CD4-positive, alpha-beta T cell (primary cell): ENCODE measurements at regions of chr19 and their contacts with region 1.

Region 1: DNA sequence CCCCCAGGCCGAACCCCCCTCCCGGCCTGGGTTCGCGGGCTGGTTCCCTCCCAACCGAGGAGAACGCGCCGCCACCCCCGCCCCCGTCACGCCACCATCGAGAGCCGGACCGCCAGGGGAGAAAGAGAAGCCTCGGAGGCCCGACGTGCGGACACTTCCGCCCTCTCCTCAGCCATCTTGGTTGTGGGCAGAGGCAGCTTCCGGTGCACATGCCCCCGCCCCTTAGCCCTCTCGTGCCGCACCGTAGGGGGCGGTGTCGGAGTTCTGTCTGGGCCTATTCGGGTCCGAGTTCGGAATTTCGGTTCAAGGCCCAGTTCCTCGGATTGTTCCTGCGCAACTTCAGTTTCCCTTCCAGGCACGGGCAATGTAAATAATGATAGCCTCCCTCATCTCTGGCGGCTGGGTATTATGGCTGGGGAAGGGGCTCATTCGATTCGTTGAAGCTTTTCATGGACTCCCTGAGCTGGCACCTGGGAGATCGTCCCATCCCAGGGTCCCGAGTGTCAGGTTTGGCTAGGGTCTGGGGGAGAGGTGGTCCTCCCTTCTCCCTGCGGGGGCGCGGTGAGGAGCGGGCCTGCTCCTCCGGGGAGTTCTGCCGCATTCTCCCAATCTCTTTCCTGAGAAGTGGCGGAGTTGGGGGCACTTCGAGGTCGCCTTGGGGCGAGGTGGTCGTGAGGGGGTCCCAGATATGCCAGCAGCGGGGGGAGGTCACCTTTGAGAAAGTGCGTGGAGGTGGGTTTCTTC is at the starts of genes IER2 and STX10:
- DNase-seq: peak; percentile 88 to 97 (median 92)
- ATAC-seq: peak; percentile 56
- H3K4me3 ChIP-seq: peak within 1 kb of the TSS; percentile 83
- H3K4me3 Mint-ChIP-seq: peak within 1 kb of the TSS; percentile 99
- H3K27ac ChIP-seq: peak within 1 kb of the TSS; percentile 74 to 97
- H3K27ac Mint-ChIP-seq: peak within 1 kb of the TSS; percentile 98
- H3K4me1 ChIP-seq: peaks cover 33% of the 10 kb centered on the region
- H3K4me1 Mint-ChIP-seq: peaks cover 30% of the 10 kb centered on the region
- H3K27me3 ChIP-seq: no peaks in the 10 kb centered on the region
- H3K27me3 Mint-ChIP-seq: peaks cover 8% of the 10 kb centered on the region
- CTCF ChIP-seq: peak; percentile 66
- total RNA-seq, gene IER2: 254 to 255 TPM
- total RNA-seq, gene STX10: 40.9 to 43.9 TPM

Region 2: DNA sequence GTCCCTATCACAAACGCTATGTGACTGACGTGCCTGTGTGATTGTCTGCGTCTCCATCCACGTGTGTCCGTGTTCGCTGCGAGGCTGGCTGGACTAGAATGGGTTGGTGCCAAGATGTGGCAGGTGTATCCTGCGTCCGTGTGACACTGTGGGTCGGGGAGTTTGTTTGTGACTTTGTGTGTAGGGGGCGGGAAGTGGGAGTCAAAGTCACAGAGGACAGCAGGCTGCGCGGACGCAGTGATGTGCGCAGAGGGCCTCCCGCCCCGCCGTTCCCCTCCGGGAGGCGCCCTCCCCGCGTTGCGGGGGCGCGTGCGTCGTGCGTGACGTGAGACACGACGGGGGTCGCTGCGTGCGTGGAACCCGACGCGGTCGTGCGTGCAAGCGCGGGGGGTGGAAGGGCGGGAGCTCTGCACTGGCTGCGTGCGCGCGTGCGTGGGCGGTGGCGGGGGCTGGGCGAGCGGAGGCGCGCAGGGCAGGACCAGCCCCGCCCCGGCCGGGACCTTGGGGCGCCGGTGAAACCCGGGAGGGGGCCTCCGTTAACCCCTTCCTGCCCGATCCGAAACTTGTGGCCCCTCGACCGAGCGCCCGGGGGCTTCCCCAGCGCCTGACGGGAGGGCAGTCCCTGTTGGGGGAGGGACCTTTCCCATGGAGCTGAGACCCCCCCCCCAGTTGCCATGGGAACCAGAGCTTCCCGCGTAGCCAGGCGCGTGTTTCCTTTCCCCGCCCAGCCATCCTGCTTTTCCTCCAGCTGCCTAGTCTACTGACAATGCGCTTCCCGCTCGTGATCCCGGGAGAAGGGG is 367.9 kb before region 1 on chr19:
- CTCF ChIA-PET with region 1: no interaction called
- POLR2A ChIA-PET with region 1: no interaction called
- intact Hi-C with region 1: loop called in 1 of 2 experiments (anchors 2 kb)
- DNase-seq: peak; percentile 89 to 99 (median 94)
- ATAC-seq: peak; percentile 75
- H3K4me3 ChIP-seq: peak overlapping the region; percentile 61
- H3K4me3 Mint-ChIP-seq: peak overlapping the region; percentile 92
- H3K27ac ChIP-seq: peak overlapping the region; percentile 91 to 98
- H3K27ac Mint-ChIP-seq: no peak overlapping the region
- H3K4me1 ChIP-seq: peaks cover 85% of the 10 kb centered on the region
- H3K4me1 Mint-ChIP-seq: peaks cover 41% of the 10 kb centered on the region
- H3K27me3 ChIP-seq: no peaks in the 10 kb centered on the region
- H3K27me3 Mint-ChIP-seq: no peaks in the 10 kb centered on the region
- CTCF ChIP-seq: no peak

Region 3: GRCh38 chr19:13104360-13104847 is 46.0 kb before region 1 on chr19:
- CTCF ChIA-PET with region 1: interaction called, 6 read pairs
- POLR2A ChIA-PET with region 1: interaction called, 38 read pairs
- intact Hi-C with region 1: loop called (anchors 1 to 5 kb)
- DNase-seq: peak; percentile 40 to 81 (median 59)
- ATAC-seq: peak; percentile 53
- H3K4me3 ChIP-seq: peak overlapping the region; percentile 77
- H3K4me3 Mint-ChIP-seq: peak overlapping the region; percentile 93
- H3K27ac ChIP-seq: peak overlapping the region; percentile 41 to 66
- H3K27ac Mint-ChIP-seq: peak overlapping the region; percentile 89
- H3K4me1 ChIP-seq: peaks cover 68% of the 10 kb centered on the region
- H3K4me1 Mint-ChIP-seq: peaks cover 38% of the 10 kb centered on the region
- H3K27me3 ChIP-seq: no peaks in the 10 kb centered on the region
- H3K27me3 Mint-ChIP-seq: no peaks in the 10 kb centered on the region
- CTCF ChIP-seq: peak; percentile 86

Region 4: GRCh38 chr19:13132471-13133180 is 17.7 kb before region 1 on chr19:
- CTCF ChIA-PET with region 1: interaction called, 4 read pairs
- POLR2A ChIA-PET with region 1: interaction called, 11 read pairs
- intact Hi-C with region 1: no loop called
- DNase-seq: peak in 6 of 14 experiments; percentile 29 to 69 (median 48)
- ATAC-seq: peak; percentile 95
- H3K4me3 ChIP-seq: no peak overlapping the region
- H3K4me3 Mint-ChIP-seq: no peak overlapping the region
- H3K27ac ChIP-seq: peak overlapping the region in 1 of 2 donors; percentile 15
- H3K27ac Mint-ChIP-seq: peak overlapping the region; percentile 80
- H3K4me1 ChIP-seq: peaks cover 24% of the 10 kb centered on the region
- H3K4me1 Mint-ChIP-seq: peaks cover 33% of the 10 kb centered on the region
- H3K27me3 ChIP-seq: no peaks in the 10 kb centered on the region
- H3K27me3 Mint-ChIP-seq: no peaks in the 10 kb centered on the region
- CTCF ChIP-seq: no peak

Region 5: GRCh38 chr19:13181747-13182388 is 31.5 kb after region 1 on chr19:
- CTCF ChIA-PET with region 1: interaction called, 4 read pairs
- POLR2A ChIA-PET with region 1: interaction called, 21 read pairs
- intact Hi-C with region 1: no loop called
- DNase-seq: peak in 3 of 14 experiments; percentile 42 to 57 (median 51)
- ATAC-seq: peak; percentile 64
- H3K4me3 ChIP-seq: no peak overlapping the region
- H3K4me3 Mint-ChIP-seq: peak overlapping the region; percentile 15
- H3K27ac ChIP-seq: no peak overlapping the region
- H3K27ac Mint-ChIP-seq: peak overlapping the region; percentile 58
- H3K4me1 ChIP-seq: peaks cover 40% of the 10 kb centered on the region
- H3K4me1 Mint-ChIP-seq: peaks cover 32% of the 10 kb centered on the region
- H3K27me3 ChIP-seq: no peaks in the 10 kb centered on the region
- H3K27me3 Mint-ChIP-seq: no peaks in the 10 kb centered on the region
- CTCF ChIP-seq: no peak

Region 6: GRCh38 chr19:13234518-13234917 is 84.2 kb after region 1 on chr19:
- CTCF ChIA-PET with region 1: interaction called, 3 read pairs
- POLR2A ChIA-PET with region 1: interaction called, 4 read pairs
- intact Hi-C with region 1: loop called in 1 of 2 experiments (anchors 1 kb)
- DNase-seq: peak; percentile 34 to 80 (median 57)
- ATAC-seq: peak; percentile 94
- H3K4me3 ChIP-seq: peak overlapping the region; percentile 12
- H3K4me3 Mint-ChIP-seq: peak overlapping the region; percentile 46
- H3K27ac ChIP-seq: no peak overlapping the region
- H3K27ac Mint-ChIP-seq: no peak overlapping the region
- H3K4me1 ChIP-seq: peaks cover 14% of the 10 kb centered on the region
- H3K4me1 Mint-ChIP-seq: peaks cover 14% of the 10 kb centered on the region
- H3K27me3 ChIP-seq: no peaks in the 10 kb centered on the region
- H3K27me3 Mint-ChIP-seq: no peaks in the 10 kb centered on the region
- CTCF ChIP-seq: peak; percentile 77

Region 7: DNA sequence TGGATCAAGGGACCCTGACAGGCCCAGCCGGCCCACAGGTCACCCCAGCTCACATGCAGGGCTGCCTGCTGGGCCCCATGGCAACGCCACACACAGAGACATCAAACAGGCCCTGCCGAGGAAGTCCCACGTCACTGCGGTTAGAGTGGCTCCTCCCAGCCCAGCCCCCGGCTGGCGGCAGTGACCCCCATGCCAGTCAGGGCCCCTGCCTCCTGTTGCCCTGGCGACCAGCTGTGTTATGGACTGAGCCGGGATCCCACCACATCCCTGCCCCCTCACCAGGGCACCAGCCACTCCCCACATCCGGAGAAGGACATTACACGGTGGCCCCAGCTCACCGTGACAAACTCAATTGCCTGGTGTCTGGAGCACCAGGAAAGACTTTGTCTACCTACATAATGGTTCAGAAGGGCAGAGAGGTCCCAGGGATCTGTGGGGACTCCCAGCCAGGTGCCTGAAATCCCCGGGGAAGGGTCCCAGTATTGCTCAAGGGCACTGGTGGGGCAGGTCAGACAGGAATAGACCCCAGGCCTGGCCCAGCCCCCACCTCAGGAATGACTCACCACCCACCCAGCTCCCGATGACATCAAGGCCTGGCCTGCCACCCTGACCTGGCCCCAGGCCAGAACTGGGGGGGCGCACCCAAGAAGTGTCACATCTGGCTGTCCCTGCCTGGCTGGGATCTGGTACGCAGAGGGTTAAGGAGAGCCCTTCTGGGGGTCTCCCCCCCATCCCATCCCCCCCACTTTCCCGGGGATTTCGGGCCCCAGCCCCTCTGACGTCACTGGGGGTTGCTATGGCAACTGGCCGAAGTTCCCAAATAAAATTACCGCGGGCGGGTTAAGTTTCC is 696.4 kb after region 1 on chr19:
- CTCF ChIA-PET with region 1: no interaction called
- POLR2A ChIA-PET with region 1: no interaction called
- intact Hi-C with region 1: loop called in 1 of 2 experiments (anchors 10 kb)
- DNase-seq: peak; percentile 86 to 99 (median 96)
- ATAC-seq: peak; percentile 61
- H3K4me3 ChIP-seq: peak overlapping the region; percentile 76
- H3K4me3 Mint-ChIP-seq: peak overlapping the region; percentile 86
- H3K27ac ChIP-seq: peak overlapping the region; percentile 100
- H3K27ac Mint-ChIP-seq: peak overlapping the region; percentile 99
- H3K4me1 ChIP-seq: peaks cover 86% of the 10 kb centered on the region
- H3K4me1 Mint-ChIP-seq: peaks cover 63% of the 10 kb centered on the region
- H3K27me3 ChIP-seq: no peaks in the 10 kb centered on the region
- H3K27me3 Mint-ChIP-seq: no peaks in the 10 kb centered on the region
- CTCF ChIP-seq: no peak